ENCODE measurements at regions of chr5 and their contacts with region 1.

Region 1: DNA sequence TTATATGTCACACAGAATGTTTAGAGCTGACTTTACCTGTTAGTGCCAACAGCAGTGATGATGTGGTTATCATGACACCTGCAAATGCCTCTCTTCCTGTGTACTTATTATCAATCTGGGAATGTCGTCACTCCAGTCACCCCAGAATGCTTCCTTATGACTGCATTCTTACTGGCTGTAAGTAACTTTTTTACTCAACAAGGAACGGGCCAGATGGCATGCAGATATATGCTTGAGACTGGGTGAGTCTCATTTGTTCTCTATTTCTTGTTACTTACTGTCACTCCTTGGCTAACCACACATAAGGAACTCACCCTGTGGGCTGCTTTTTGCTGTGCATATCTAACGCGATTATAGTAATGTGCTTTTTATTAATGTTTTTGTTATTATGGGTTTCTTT is 385.5 kb upstream of the MEF2C start:
- DNase-seq: peak; percentile 51
- ATAC-seq: peak; percentile 38
- H3K4me3 ChIP-seq: no peak overlapping the region
- H3K27ac ChIP-seq: peak overlapping the region; percentile 43; the same call in 1 of the 2 replicates
- H3K4me1 ChIP-seq: peaks cover 46% of the 10 kb centered on the region
- H3K27me3 ChIP-seq: no peaks in the 10 kb centered on the region
- CTCF ChIP-seq: no peak
- EP300 ChIP-seq: no peak
- POLR2A ChIP-seq: no peak
- RAD21 ChIP-seq: 0 out of 2 replicates have a peak, but pooled peaks have one; percentile 12

Region 2: DNA sequence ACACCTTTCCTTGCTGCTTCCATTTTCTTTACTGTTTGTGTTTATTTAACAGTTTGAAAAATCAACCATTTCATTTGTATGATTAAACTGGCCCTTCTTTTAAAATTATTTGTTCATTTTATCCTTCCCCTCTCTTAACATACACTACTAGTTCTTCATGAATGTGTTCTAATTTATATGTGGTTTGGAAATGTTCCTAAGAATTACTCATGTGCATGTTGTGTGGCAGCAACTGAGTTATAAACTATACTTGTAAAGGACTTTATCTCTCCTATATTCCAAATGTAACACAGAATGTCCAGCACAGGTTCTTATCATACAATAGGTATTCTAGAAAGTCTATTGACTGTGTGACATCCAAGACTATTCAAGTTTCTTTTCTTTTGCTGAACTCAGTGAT is 27.3 kb before region 1 on chr5:
- CTCF ChIA-PET with region 1: interaction called, 4 read pairs
- POLR2A ChIA-PET with region 1: interaction called, 3 read pairs
- RAD21 ChIA-PET with region 1: interaction called, 4 read pairs
- SMC1A ChIA-PET with region 1: interaction called, 10 read pairs
- in situ Hi-C with region 1: no loop called
- intact Hi-C with region 1: no loop called
- DNase-seq: no peak
- ATAC-seq: no peak
- H3K4me3 ChIP-seq: no peak overlapping the region
- H3K27ac ChIP-seq: no peak overlapping the region
- H3K4me1 ChIP-seq: no peaks in the 10 kb centered on the region
- H3K27me3 ChIP-seq: no peaks in the 10 kb centered on the region
- CTCF ChIP-seq: no peak
- EP300 ChIP-seq: no peak
- POLR2A ChIP-seq: no peak
- RAD21 ChIP-seq: no peak

Region 3: DNA sequence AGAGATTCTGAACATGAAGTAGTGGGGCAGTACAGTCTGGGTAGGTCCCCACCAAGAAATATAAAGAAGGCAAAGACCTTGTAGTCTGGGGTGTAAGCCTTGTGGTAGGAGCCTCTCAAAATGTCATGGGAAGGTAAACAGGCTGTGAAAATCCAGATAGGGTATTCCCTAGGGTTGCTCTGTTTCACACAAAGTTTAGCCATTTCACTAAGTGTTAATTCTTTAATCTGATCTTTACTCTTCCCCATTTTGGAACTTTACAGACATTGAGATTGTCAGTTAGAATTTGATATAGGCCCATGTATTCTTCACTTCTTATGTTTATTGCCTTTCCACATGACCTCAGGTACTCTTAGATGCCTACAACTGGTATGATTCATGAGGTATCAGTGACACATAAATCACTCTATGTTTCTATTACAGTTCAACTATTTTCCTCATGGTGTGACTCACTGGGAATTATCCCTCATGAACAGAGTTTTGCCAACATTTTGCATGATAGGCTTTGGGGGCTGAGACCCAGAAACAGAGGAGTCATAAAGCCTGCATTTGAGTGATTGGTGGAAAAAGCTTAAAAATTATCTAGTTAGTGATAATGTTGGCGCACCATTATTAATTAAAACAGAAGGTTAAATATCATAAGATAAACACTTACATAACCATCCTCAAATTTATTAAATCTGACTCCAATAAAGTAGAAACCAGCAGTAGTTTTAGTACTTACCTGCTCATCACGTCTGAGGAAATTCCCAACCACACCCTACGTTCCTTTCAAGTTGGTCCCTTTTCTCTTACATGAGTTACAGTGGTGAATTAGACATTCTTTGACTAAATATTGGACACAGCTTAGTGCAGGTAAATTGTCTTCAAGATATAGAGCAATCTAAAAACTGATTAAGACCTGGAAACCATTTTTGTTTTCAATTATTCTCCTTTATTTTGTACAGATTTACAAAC is 14.4 kb after region 1 on chr5:
- CTCF ChIA-PET with region 1: interaction called, 13 read pairs
- POLR2A ChIA-PET with region 1: interaction called, 6 read pairs
- RAD21 ChIA-PET with region 1: interaction called, 21 read pairs
- SMC1A ChIA-PET with region 1: interaction called, 33 read pairs
- in situ Hi-C with region 1: no loop called
- intact Hi-C with region 1: no loop called
- DNase-seq: peak; percentile 31
- ATAC-seq: peak; percentile 54
- H3K4me3 ChIP-seq: no peak overlapping the region
- H3K27ac ChIP-seq: peak overlapping the region; percentile 59
- H3K4me1 ChIP-seq: peaks cover 40% of the 10 kb centered on the region
- H3K27me3 ChIP-seq: no peaks in the 10 kb centered on the region
- CTCF ChIP-seq: no peak
- EP300 ChIP-seq: peak in 1 of 2 experiments; percentile 30; a peak in 1 of 4 replicates
- POLR2A ChIP-seq: no peak
- RAD21 ChIP-seq: peak; percentile 1; the same call in 1 of the 2 replicates

Region 4: GRCh38 chr5:89313804-89314588 is 45.5 kb after region 1 on chr5:
- CTCF ChIA-PET with region 1: interaction called, 9 read pairs
- POLR2A ChIA-PET with region 1: interaction called, 11 read pairs
- RAD21 ChIA-PET with region 1: interaction called, 31 read pairs
- SMC1A ChIA-PET with region 1: interaction called, 27 read pairs
- in situ Hi-C with region 1: no loop called
- intact Hi-C with region 1: loop called (anchors 1 kb)
- DNase-seq: peak; percentile 99
- ATAC-seq: peak; percentile 96
- H3K4me3 ChIP-seq: no peak overlapping the region
- H3K27ac ChIP-seq: peak overlapping the region; percentile 97
- H3K4me1 ChIP-seq: peaks cover 40% of the 10 kb centered on the region
- H3K27me3 ChIP-seq: no peaks in the 10 kb centered on the region
- CTCF ChIP-seq: no peak
- EP300 ChIP-seq: peak; percentile 95 to 98
- POLR2A ChIP-seq: peak; percentile 36; the same call in 1 of the 2 replicates
- RAD21 ChIP-seq: peak; percentile 40

Region 5: GRCh38 chr5:89384391-89384790 is 115.9 kb after region 1 on chr5:
- CTCF ChIA-PET with region 1: no interaction called
- POLR2A ChIA-PET with region 1: no interaction called
- RAD21 ChIA-PET with region 1: no interaction called
- SMC1A ChIA-PET with region 1: no interaction called
- in situ Hi-C with region 1: no loop called
- intact Hi-C with region 1: no loop called
- DNase-seq: no peak
- ATAC-seq: no peak
- H3K4me3 ChIP-seq: no peak overlapping the region
- H3K27ac ChIP-seq: no peak overlapping the region
- H3K4me1 ChIP-seq: no peaks in the 10 kb centered on the region
- H3K27me3 ChIP-seq: no peaks in the 10 kb centered on the region
- CTCF ChIP-seq: no peak
- EP300 ChIP-seq: no peak
- POLR2A ChIP-seq: no peak
- RAD21 ChIP-seq: no peak

Region 6: GRCh38 chr5:89435347-89435746 is 166.9 kb after region 1 on chr5:
- CTCF ChIA-PET with region 1: interaction called, 8 read pairs
- POLR2A ChIA-PET with region 1: interaction called, 3 read pairs
- RAD21 ChIA-PET with region 1: interaction called, 26 read pairs
- SMC1A ChIA-PET with region 1: interaction called, 13 read pairs
- in situ Hi-C with region 1: no loop called
- intact Hi-C with region 1: no loop called
- DNase-seq: peak; percentile 90
- ATAC-seq: peak; percentile 88
- H3K4me3 ChIP-seq: 0 out of 2 replicates have a peak overlapping the region, but pooled peaks have one; percentile 41
- H3K27ac ChIP-seq: peak overlapping the region; percentile 92
- H3K4me1 ChIP-seq: peaks cover 29% of the 10 kb centered on the region; the same call in 1 of the 2 replicates
- H3K27me3 ChIP-seq: no peaks in the 10 kb centered on the region
- CTCF ChIP-seq: 0 out of 6 replicates have a peak, but pooled peaks of 1 of the 3 experiments have one; percentile 3
- EP300 ChIP-seq: peak; percentile 50 to 87; a peak in 2 of 4 replicates
- POLR2A ChIP-seq: 0 out of 2 replicates have a peak, but pooled peaks have one; percentile 28
- RAD21 ChIP-seq: peak; percentile 53